ENCODE measurements at regions of chr21 and their contacts with region 1.

Region 1: GRCh38 chr21:37072988-37073416 is at the starts of genes PIGP and TTC3:
- DNase-seq: peak; percentile 93
- H3K4me3 Mint-ChIP-seq: peak within 1 kb of the TSS; percentile 90
- H3K27ac Mint-ChIP-seq: peak within 1 kb of the TSS; percentile 89
- H3K4me1 Mint-ChIP-seq: peaks cover 48% of the 10 kb centered on the region
- H3K27me3 Mint-ChIP-seq: no peaks in the 10 kb centered on the region
- total RNA-seq, gene PIGP: 20.6 and 23.7 TPM in 2 replicates
- total RNA-seq, gene TTC3: 60.9 and 66.8 TPM in 2 replicates

Region 2: GRCh38 chr21:36966066-36966820 is 106.8 kb before region 1 on chr21 and contains the start of gene HLCS:
- intact Hi-C with region 1: loop called (anchors 1 kb)
- DNase-seq: peak; percentile 66
- H3K4me3 Mint-ChIP-seq: peak within 1 kb of the TSS; percentile 84
- H3K27ac Mint-ChIP-seq: peak within 1 kb of the TSS; percentile 80
- H3K4me1 Mint-ChIP-seq: peaks cover 20% of the 10 kb centered on the region
- H3K27me3 Mint-ChIP-seq: no peaks in the 10 kb centered on the region
- total RNA-seq, gene HLCS: 17.2 and 18.7 TPM in 2 replicates

Region 3: GRCh38 chr21:36989699-36990507 is 83.1 kb before region 1 on chr21:
- intact Hi-C with region 1: loop called (anchors 5 kb)
- DNase-seq: peak; percentile 86
- H3K4me3 Mint-ChIP-seq: peak overlapping the region; percentile 78
- H3K27ac Mint-ChIP-seq: peak overlapping the region; percentile 89
- H3K4me1 Mint-ChIP-seq: peaks cover 28% of the 10 kb centered on the region
- H3K27me3 Mint-ChIP-seq: no peaks in the 10 kb centered on the region

Region 4: GRCh38 chr21:37119421-37120218 is 46.6 kb after region 1 on chr21:
- intact Hi-C with region 1: loop called (anchors 2 kb)
- DNase-seq: no peak
- H3K4me3 Mint-ChIP-seq: peak overlapping the region; percentile 35
- H3K27ac Mint-ChIP-seq: peak overlapping the region; percentile 79
- H3K4me1 Mint-ChIP-seq: peaks cover 35% of the 10 kb centered on the region
- H3K27me3 Mint-ChIP-seq: no peaks in the 10 kb centered on the region

Region 5: DNA sequence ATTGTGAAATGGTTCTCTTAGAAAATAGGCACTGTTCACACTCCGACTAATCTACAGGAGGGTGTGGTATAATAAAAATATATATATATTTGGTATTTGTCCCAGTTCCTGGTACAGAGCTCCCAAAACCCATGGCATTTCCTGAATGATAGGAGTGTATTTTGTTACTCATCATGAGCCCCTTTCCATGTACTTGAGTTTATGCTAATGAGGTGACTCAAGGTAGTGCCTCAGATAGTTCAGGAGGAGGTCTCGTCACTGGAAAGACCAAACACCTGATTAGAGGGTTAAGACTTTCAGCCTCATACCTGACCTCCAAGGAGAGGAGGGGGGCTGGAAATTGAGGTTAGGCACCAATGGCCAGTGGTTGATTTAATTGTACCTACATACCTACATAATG is 58.0 kb after region 1 on chr21:
- intact Hi-C with region 1: no loop called
- DNase-seq: no peak
- H3K4me3 Mint-ChIP-seq: no peak overlapping the region
- H3K27ac Mint-ChIP-seq: no peak overlapping the region
- H3K4me1 Mint-ChIP-seq: peaks cover 10% of the 10 kb centered on the region
- H3K27me3 Mint-ChIP-seq: no peaks in the 10 kb centered on the region

Region 6: GRCh38 chr21:37267269-37268184 is 194.5 kb after region 1 on chr21 and contains the start of gene VPS26C:
- intact Hi-C with region 1: loop called (anchors 2 kb)
- DNase-seq: peak; percentile 99
- H3K4me3 Mint-ChIP-seq: peak within 1 kb of the TSS; percentile 96
- H3K27ac Mint-ChIP-seq: peak within 1 kb of the TSS; percentile 97
- H3K4me1 Mint-ChIP-seq: peaks cover 30% of the 10 kb centered on the region
- H3K27me3 Mint-ChIP-seq: peaks cover 2% of the 10 kb centered on the region
- total RNA-seq, gene VPS26C: 58.0 and 59.4 TPM in 2 replicates

Measured in activated T-helper 2 cell treated with anti-CD3 and anti-CD28 coated beads, Interferon-gamma antibody, Interleukin-2, Interleukin-4, amounts not matched to agents 10 μg/mL and 5 μg/mL and 100 μg/mL, durations not matched to agents 14 hours and 24 hours and 36 hours (primary cell).